Naive thymus-derived CD4-positive, alpha-beta T cell (primary cell): ENCODE measurements at regions of chr1 and their contacts with region 1.

Region 1: DNA sequence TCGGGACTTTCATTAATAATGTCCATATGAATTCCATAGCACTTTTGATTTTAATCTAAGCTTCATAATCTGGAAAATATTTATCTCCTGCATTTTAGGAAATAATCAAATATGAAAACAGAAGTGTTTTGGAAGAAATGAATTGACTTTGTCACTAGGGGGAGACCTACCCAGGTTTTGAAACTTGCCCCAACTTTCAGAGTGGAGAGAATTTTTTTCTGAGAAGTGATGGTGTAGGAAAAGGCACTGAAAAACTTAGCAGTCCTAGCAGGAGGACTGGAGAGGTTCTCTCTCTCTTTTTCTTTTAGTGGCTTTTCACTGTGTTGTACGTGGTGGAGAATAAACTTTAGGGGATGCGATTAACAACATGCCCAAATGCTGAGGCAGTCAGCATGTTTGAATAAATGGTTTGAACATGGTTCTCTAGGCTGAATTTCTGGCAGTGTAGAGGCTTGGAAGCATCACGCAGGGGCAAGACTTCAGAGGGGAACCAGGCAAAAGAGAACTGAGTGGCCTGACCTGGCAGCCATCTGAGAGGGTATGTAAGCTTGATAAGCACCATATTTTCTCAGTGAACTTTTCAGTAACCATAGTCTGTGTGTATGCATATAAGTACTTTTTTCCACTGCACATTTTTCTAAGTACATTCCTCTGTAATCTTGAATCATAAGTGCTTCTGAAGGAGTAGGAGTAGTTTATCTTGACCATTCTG is 68.3 kb upstream of the NEK7 start:
- DNase-seq: peak in 6 of 9 donors; percentile 9 to 52 (median 37)
- ATAC-seq: peak; percentile 40
- H3K4me3 ChIP-seq: no peak overlapping the region
- H3K4me3 Mint-ChIP-seq: no peak overlapping the region
- H3K27ac ChIP-seq: no peak overlapping the region
- H3K27ac Mint-ChIP-seq: no peak overlapping the region
- H3K4me1 ChIP-seq: no peaks in the 10 kb centered on the region
- H3K4me1 Mint-ChIP-seq: peaks cover 0 to 7% (median 3%) of the 10 kb centered on the region in 7 donors
- H3K27me3 ChIP-seq: no peaks in the 10 kb centered on the region
- H3K27me3 Mint-ChIP-seq: peaks cover 0 to 8% (median 4%) of the 10 kb centered on the region in 5 donors

Region 2: DNA sequence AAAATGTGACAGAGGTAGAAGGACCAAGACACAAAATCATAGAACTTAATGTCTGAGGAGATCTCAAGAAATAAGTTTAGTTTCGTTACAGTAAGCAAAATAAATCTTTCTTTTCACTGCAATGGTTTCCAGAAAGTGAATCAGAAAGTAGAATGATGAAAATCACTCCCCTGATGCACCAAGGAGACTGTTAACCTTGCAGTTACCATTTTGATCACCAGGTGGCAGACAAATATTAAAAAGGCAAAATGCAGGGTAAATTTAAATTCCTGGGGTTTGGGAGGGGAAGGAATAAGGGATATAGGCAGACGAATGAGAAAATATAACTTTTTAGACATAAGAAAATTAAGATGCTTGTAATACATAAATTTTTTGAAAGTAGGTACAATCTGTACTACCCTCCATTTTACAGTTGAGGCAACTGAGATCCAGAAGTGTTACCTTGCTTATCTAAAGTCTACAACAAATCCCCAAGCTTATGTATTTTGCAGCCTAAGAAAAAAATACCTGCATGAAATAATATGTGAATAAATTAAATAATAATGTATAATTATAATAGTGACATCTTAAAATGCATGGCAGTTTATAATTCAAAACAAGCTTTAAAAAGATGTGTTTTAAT is 567.3 kb before region 1 on chr1:
- CTCF ChIA-PET with region 1: no interaction called
- POLR2A ChIA-PET with region 1: no interaction called
- intact Hi-C with region 1: loop called in 1 of 2 experiments (anchors 10 kb)
- DNase-seq: peak in 7 of 9 donors; percentile 2 to 34 (median 24)
- ATAC-seq: no peak
- H3K4me3 ChIP-seq: no peak overlapping the region
- H3K4me3 Mint-ChIP-seq: no peak overlapping the region
- H3K27ac ChIP-seq: no peak overlapping the region
- H3K27ac Mint-ChIP-seq: no peak overlapping the region
- H3K4me1 ChIP-seq: no peaks in the 10 kb centered on the region
- H3K4me1 Mint-ChIP-seq: peaks cover 0 to 5% (median 0%) of the 10 kb centered on the region in 7 donors
- H3K27me3 ChIP-seq: no peaks in the 10 kb centered on the region
- H3K27me3 Mint-ChIP-seq: no peaks in the 10 kb centered on the region

Region 3: DNA sequence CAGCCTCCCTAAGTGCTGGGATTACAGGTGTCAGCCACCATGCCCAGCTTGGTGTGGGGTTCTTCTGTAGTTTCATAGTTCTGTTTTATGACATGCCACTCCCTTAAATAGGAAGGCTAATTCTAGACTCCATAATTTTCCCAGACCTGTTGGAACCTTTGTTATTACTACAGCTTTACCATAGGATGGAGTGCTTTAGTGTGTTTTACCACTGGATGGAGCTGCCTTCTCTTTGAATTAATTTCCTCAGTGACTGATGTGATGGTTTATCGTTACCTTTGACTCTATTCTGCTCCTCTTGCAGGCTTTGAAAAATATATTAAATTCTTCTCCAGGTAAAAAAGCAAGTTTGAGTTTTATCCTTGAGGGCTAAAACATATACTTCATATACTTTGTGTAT is 16.3 kb before region 1 on chr1:
- CTCF ChIA-PET with region 1: no interaction called
- POLR2A ChIA-PET with region 1: no interaction called
- intact Hi-C with region 1: no loop called
- DNase-seq: no peak
- ATAC-seq: no peak
- H3K4me3 ChIP-seq: no peak overlapping the region
- H3K4me3 Mint-ChIP-seq: no peak overlapping the region
- H3K27ac ChIP-seq: no peak overlapping the region
- H3K27ac Mint-ChIP-seq: no peak overlapping the region
- H3K4me1 ChIP-seq: no peaks in the 10 kb centered on the region
- H3K4me1 Mint-ChIP-seq: no peaks in the 10 kb centered on the region
- H3K27me3 ChIP-seq: peaks cover 0 to 3% of the 10 kb centered on the region in 2 donors
- H3K27me3 Mint-ChIP-seq: peaks cover 0 to 41% (median 20%) of the 10 kb centered on the region in 5 donors

Region 4: GRCh38 chr1:198253668-198254067 is 165.2 kb after region 1 on chr1:
- CTCF ChIA-PET with region 1: no interaction called
- POLR2A ChIA-PET with region 1: no interaction called
- intact Hi-C with region 1: loop called in 1 of 2 experiments (anchors 1 kb)
- DNase-seq: no peak
- ATAC-seq: peak; percentile 66
- H3K4me3 ChIP-seq: no peak overlapping the region
- H3K4me3 Mint-ChIP-seq: peak overlapping the region in 1 of 10 donors; percentile 50
- H3K27ac ChIP-seq: no peak overlapping the region
- H3K27ac Mint-ChIP-seq: peak overlapping the region in 8 of 9 donors; percentile 8 to 79 (median 61)
- H3K4me1 ChIP-seq: no peaks in the 10 kb centered on the region
- H3K4me1 Mint-ChIP-seq: peaks cover 24 to 59% (median 50%) of the 10 kb centered on the region in 7 donors
- H3K27me3 ChIP-seq: no peaks in the 10 kb centered on the region
- H3K27me3 Mint-ChIP-seq: no peaks in the 10 kb centered on the region

Region 5: DNA sequence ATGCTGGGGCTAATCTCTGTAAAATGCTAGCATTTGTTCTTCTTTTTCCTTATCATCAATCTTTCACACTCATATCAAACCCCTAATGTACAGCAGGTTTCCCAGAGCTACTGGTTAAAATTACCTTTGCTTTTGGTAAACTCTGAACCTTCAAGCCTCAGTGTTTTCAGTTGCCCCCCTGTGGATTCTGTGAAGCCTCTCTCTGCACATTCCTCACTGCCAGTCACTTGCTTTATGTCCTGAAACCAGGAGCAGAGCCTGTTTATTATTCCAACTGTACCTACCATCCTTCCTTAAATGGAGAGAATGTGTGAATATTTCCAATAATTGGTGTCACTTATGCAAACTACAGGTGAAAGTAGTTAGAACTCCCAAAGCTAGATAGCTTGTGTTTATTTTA is 202.5 kb after region 1 on chr1:
- CTCF ChIA-PET with region 1: no interaction called
- POLR2A ChIA-PET with region 1: no interaction called
- intact Hi-C with region 1: no loop called
- DNase-seq: no peak
- ATAC-seq: no peak
- H3K4me3 ChIP-seq: no peak overlapping the region
- H3K4me3 Mint-ChIP-seq: no peak overlapping the region
- H3K27ac ChIP-seq: no peak overlapping the region
- H3K27ac Mint-ChIP-seq: peak overlapping the region in 3 of 9 donors; percentile 10 to 58 (median 28)
- H3K4me1 ChIP-seq: no peaks in the 10 kb centered on the region
- H3K4me1 Mint-ChIP-seq: peaks cover 0 to 25% (median 14%) of the 10 kb centered on the region in 7 donors
- H3K27me3 ChIP-seq: no peaks in the 10 kb centered on the region
- H3K27me3 Mint-ChIP-seq: no peaks in the 10 kb centered on the region

Region 6: GRCh38 chr1:198359024-198359653 is 270.6 kb after region 1 on chr1:
- CTCF ChIA-PET with region 1: interaction called, 3 read pairs
- POLR2A ChIA-PET with region 1: no interaction called
- intact Hi-C with region 1: loop called (anchors 1 to 5 kb)
- DNase-seq: peak in 5 of 9 donors; percentile 3 to 17 (median 7)
- ATAC-seq: no peak
- H3K4me3 ChIP-seq: no peak overlapping the region
- H3K4me3 Mint-ChIP-seq: no peak overlapping the region
- H3K27ac ChIP-seq: no peak overlapping the region
- H3K27ac Mint-ChIP-seq: no peak overlapping the region
- H3K4me1 ChIP-seq: no peaks in the 10 kb centered on the region
- H3K4me1 Mint-ChIP-seq: peaks cover 0 to 3% (median 0%) of the 10 kb centered on the region in 7 donors
- H3K27me3 ChIP-seq: no peaks in the 10 kb centered on the region
- H3K27me3 Mint-ChIP-seq: peaks cover 0 to 21% (median 3%) of the 10 kb centered on the region in 5 donors

Region 7: GRCh38 chr1:198595765-198596164 is 507.2 kb after region 1 on chr1:
- CTCF ChIA-PET with region 1: no interaction called
- POLR2A ChIA-PET with region 1: no interaction called
- intact Hi-C with region 1: no loop called
- DNase-seq: no peak
- ATAC-seq: no peak
- H3K4me3 ChIP-seq: no peak overlapping the region
- H3K4me3 Mint-ChIP-seq: peak overlapping the region in 5 of 10 donors; percentile 0 to 80 (median 14)
- H3K27ac ChIP-seq: no peak overlapping the region
- H3K27ac Mint-ChIP-seq: peak overlapping the region in 7 of 9 donors; percentile 4 to 96 (median 79)
- H3K4me1 ChIP-seq: peaks cover 34 to 43% of the 10 kb centered on the region in 2 donors
- H3K4me1 Mint-ChIP-seq: peaks cover 28 to 73% (median 65%) of the 10 kb centered on the region in 7 donors
- H3K27me3 ChIP-seq: no peaks in the 10 kb centered on the region
- H3K27me3 Mint-ChIP-seq: no peaks in the 10 kb centered on the region

Region 8: GRCh38 chr1:198693321-198693720 is 604.8 kb after region 1 on chr1:
- CTCF ChIA-PET with region 1: interaction called, 4 read pairs
- POLR2A ChIA-PET with region 1: no interaction called
- intact Hi-C with region 1: loop called in 1 of 2 experiments (anchors 5 kb)
- DNase-seq: no peak
- ATAC-seq: no peak
- H3K4me3 ChIP-seq: no peak overlapping the region
- H3K4me3 Mint-ChIP-seq: peak overlapping the region; percentile 38 to 73 (median 58)
- H3K27ac ChIP-seq: peak overlapping the region; percentile 18
- H3K27ac Mint-ChIP-seq: peak overlapping the region; percentile 67 to 91 (median 77)
- H3K4me1 ChIP-seq: peaks cover 51 to 61% of the 10 kb centered on the region in 2 donors
- H3K4me1 Mint-ChIP-seq: peaks cover 50 to 94% (median 88%) of the 10 kb centered on the region in 7 donors
- H3K27me3 ChIP-seq: no peaks in the 10 kb centered on the region
- H3K27me3 Mint-ChIP-seq: no peaks in the 10 kb centered on the region